Uterus (tissue), 4 donors: ENCODE measurements at regions of chr20 and their contacts with region 1.

Region 1: DNA sequence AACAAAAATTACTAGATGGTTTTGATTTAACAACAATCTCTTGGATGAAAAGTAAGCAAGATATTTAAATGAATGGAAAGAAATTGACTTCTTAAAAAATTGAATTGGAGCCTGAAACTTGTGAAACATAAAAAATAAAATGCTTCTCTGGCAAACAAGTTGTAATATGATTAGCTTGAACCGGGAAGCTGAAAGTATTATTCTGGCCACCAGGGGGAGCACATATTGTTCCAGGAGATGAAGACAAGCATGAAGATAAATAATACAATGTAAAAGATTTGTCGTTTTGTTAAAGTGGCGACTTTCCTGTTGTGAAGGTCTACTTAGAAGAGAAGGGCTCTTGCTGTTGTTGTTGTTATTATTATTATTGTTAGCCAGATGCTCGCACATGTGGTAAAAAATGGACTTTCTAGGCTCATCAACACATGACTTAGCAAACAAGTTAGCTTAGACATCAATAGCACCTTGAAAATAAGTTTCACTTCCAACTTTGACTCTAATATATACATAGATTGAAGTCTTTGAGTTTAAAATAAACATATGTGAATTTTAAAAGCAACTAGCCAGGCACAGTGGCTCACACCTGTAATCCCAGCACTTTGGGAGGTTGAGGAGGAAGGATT is 14.2 kb downstream of the PAX1 start:
- DNase-seq: peak in 1 of 2 donors; percentile 46
- H3K4me3 ChIP-seq: no peak overlapping the region
- H3K27ac ChIP-seq: no peak overlapping the region
- H3K4me1 ChIP-seq: no peaks in the 10 kb centered on the region
- H3K27me3 ChIP-seq: peaks cover 0 to 5% of the 10 kb centered on the region in 2 donors
- CTCF ChIP-seq: peak; percentile 43 to 66 (median 56)
- POLR2A ChIP-seq: no peak

Region 2: GRCh38 chr20:22106308-22106938 is 386.7 kb after region 1 on chr20:
- intact Hi-C with region 1: loop called (anchors 10 kb)
- DNase-seq: peak in 1 of 2 donors; percentile 15
- H3K4me3 ChIP-seq: no peak overlapping the region
- H3K27ac ChIP-seq: no peak overlapping the region
- H3K4me1 ChIP-seq: no peaks in the 10 kb centered on the region
- H3K27me3 ChIP-seq: no peaks in the 10 kb centered on the region
- CTCF ChIP-seq: peak; percentile 30 to 62 (median 42)
- POLR2A ChIP-seq: no peak